ENCODE measurements at regions of chrX and their contacts with region 1.

Region 1: GRCh38 chrX:16786139-16786790 is at the start of gene TXLNG:
- DNase-seq: peak; percentile 96
- ATAC-seq: peak; percentile 99
- H3K4me3 Mint-ChIP-seq: peak within 1 kb of the TSS; percentile 93
- H3K27ac Mint-ChIP-seq: peak within 1 kb of the TSS; percentile 76
- H3K4me1 Mint-ChIP-seq: peaks cover 18% of the 10 kb centered on the region
- H3K27me3 Mint-ChIP-seq: no peaks in the 10 kb centered on the region
- total RNA-seq, gene TXLNG: 17.3 to 21.4 TPM

Region 2: DNA sequence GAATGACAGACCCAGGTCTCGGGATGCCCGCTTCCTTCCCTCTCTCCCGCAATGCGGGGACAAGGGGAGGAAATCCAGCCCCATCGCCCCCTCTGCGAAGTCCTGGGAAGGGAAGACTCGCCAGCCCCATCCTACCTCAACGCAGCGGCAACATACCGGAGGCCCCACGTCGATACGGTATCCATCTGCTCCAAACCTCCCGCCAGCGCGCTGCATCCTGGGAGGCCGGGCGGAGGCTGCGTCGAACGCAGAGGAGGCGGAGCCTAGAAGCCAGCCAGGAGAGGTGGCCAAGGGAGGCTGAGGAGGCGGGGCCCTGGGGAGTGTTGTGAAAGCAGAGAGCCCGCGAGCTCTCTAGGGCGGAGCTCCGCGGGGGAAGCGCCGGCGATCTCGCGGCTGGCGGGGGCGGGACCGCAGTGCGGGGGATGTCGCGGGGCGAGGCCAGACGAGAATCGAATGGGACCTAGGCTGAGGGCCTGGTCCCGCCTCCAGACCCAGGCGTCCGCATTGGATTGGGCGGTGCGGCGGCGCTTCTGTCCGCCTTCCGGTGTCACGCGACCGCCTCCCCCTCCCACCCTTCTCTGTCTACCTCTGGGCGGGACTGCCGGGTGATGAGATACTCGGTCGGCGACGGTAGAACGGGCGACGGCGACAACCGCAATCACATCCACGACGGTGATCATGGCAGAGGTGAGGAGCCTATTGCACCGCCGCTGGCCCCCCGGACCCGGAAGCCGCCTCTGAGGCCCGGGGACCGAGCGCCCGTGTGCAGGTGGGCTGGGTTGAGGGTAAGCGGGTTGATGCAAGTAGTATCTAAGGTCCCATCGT is 1913.2 kb before region 1 on chrX and contains the starts of genes FANCB and MOSPD2:
- CTCF ChIA-PET with region 1: no interaction called
- POLR2A ChIA-PET with region 1: no interaction called
- intact Hi-C with region 1: loop called in 1 of 2 experiments (anchors 10 kb)
- DNase-seq: peak; percentile 95
- ATAC-seq: peak; percentile 96
- H3K4me3 Mint-ChIP-seq: peak within 1 kb of the TSS; percentile 78
- H3K27ac Mint-ChIP-seq: peak within 1 kb of the TSS; percentile 76
- H3K4me1 Mint-ChIP-seq: peaks cover 17% of the 10 kb centered on the region
- H3K27me3 Mint-ChIP-seq: no peaks in the 10 kb centered on the region
- total RNA-seq, gene FANCB: 14.7 to 15.4 TPM
- total RNA-seq, gene MOSPD2: 18.9 to 24.5 TPM

Region 3: GRCh38 chrX:15335135-15336022 is 1450.9 kb before region 1 on chrX and contains the start of gene PIGA:
- CTCF ChIA-PET with region 1: no interaction called
- POLR2A ChIA-PET with region 1: no interaction called
- intact Hi-C with region 1: loop called in 1 of 2 experiments (anchors 5 kb)
- DNase-seq: peak; percentile 94
- ATAC-seq: peak; percentile 97
- H3K4me3 Mint-ChIP-seq: peak within 1 kb of the TSS; percentile 84
- H3K27ac Mint-ChIP-seq: peak within 1 kb of the TSS; percentile 91
- H3K4me1 Mint-ChIP-seq: peaks cover 14% of the 10 kb centered on the region
- H3K27me3 Mint-ChIP-seq: peaks cover 4% of the 10 kb centered on the region
- total RNA-seq, gene PIGA: 37.2 to 37.9 TPM

Region 4: DNA sequence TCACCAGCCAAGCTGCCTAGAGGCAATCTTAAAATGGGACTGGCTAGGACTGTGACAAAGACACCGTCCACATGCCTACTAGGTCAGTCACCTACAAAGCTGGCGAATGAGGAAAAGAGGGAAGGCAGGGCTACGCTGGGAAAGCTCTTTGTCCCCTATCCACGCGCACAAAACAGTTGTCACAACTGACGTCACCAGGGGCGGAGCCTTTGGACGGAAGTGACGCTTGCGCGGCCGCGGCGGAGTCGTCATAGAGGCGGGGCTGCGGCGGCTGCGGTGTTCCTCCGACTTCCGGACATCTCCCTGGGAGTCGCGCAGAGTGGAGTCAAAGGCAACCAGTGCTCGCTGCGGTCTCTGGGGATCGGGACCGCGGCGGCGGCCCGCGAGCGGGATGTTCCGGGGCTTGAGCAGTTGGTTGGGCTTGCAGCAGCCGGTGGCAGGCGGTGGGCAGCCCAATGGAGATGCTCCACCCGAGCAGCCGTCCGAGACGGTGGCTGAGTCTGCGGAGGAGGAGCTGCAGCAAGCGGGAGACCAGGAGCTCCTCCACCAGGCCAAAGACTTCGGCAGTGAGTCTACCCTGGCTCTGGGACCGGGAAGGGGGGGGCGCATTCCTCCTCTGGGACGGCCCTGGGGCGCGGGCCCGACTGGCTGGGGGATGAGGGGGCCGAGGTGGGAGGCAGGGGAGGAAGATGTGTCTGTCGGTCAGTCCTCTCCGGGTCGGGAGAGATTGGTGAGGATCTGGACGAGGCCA is 66.8 kb before region 1 on chrX and contains the start of gene SYAP1:
- CTCF ChIA-PET with region 1: no interaction called
- POLR2A ChIA-PET with region 1: interaction called, 3 read pairs
- intact Hi-C with region 1: loop called (anchors 1 kb)
- DNase-seq: peak; percentile 94
- ATAC-seq: peak; percentile 96
- H3K4me3 Mint-ChIP-seq: peak within 1 kb of the TSS; percentile 74
- H3K27ac Mint-ChIP-seq: peak within 1 kb of the TSS; percentile 88
- H3K4me1 Mint-ChIP-seq: peaks cover 22% of the 10 kb centered on the region
- H3K27me3 Mint-ChIP-seq: no peaks in the 10 kb centered on the region
- total RNA-seq, gene SYAP1: 22.8 to 31.4 TPM

Measured in activated CD4-positive, alpha-beta T cell treated with anti-CD3 and anti-CD28 coated beads for 36 hours (primary cell).